ENCODE measurements at regions of chr12 and their contacts with region 1.

Region 1: GRCh38 chr12:32755654-32756475 is at the start of gene YARS2:
- DNase-seq: peak; percentile 91 to 99 (median 92)

Region 2: DNA sequence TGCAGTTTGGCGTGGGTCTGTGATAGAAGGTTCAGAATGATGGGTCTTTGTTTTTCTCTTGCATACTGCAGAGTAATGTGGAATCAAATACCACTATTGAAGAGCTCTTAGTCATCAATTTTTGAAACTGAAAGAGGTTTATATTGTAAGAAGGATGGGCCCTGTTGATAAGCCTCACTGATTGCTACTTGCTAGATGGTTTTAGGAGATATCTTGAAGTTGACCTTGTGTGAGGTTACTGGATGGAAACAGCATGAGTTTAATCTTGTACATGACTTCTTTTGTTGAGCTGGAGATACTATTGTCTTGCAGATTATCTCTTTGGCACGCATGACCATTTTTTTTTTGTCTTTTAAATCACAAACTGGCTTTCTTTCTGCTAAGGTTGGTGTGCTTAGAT is 635.4 kb before region 1 on chr12:
- intact Hi-C with region 1: no loop called
- DNase-seq: no peak

Region 3: GRCh38 chr12:32240831-32241230 is 515.0 kb before region 1 on chr12:
- intact Hi-C with region 1: no loop called
- DNase-seq: no peak

Region 4: DNA sequence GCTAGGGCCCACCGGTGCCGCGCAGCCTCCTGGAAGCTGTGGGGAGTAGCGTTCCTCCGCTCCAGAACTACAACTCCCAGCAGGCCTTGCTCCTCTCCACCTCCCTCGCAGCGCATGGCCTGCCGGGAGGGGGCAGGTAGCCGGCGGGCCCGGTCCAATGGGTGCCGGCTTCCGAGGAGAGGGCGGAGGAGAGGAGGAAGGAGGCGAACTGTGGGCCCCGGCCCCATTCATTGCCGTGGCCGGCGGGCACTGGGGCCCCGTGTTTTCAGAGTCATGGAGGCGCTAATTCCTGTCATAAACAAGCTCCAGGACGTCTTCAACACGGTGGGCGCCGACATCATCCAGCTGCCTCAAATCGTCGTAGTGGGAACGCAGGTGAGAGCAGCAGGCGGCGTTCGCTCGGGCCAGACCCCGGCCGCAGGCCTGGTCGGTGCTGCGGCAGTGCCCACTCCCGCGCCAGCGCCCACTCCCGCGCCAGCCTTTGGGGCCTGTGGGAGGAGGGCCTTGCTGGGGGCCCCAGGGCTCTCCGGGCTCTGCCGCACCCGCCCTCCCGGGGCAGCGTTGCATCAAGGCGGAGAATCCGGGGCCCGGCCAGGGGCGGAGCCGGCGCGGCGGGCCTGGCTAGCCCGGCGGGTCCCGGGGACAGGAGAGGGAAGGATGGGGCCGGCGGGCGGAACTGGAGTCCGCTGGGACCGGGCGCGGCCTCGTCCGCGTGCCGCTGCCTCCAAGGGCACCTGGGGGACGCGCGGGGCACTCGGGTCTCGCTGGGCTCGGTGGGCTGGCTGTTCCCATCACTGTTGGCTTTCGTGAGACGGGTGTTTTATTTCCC is 76.6 kb before region 1 on chr12 and contains the start of gene DNM1L:
- intact Hi-C with region 1: loop called (anchors 2 kb)
- DNase-seq: peak; percentile 91 to 99 (median 95)

Region 5: GRCh38 chr12:32918890-32919801 is 163.3 kb after region 1 on chr12:
- intact Hi-C with region 1: loop called (anchors 1 kb)
- DNase-seq: peak in 1 of 10 donors; percentile 17

Region 6: DNA sequence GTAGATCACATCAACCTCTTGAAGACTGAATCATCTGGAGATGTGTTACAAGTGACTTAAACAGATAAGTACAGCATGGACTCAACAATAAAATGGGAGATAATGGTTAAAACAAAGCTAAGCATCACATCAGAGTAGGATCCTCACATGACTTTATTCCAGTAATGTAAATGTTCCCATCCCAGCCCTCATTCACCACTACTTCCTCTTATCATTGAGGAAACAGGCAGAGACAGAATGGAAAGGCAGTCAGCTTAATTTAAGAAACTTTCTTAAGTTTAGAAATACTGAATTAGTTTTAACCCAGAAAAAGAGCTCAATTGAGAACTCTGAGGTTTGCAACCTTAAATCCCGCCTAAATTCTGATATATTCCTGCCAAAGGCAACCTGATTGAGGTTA is 1265.2 kb after region 1 on chr12:
- intact Hi-C with region 1: loop called (anchors 2 kb)
- DNase-seq: no peak

Measured in posterior cingulate gyrus (tissue), 11 donors.